Naive thymus-derived CD8-positive, alpha-beta T cell (primary cell): ENCODE measurements at regions of chr6 and their contacts with region 1.

Region 1: DNA sequence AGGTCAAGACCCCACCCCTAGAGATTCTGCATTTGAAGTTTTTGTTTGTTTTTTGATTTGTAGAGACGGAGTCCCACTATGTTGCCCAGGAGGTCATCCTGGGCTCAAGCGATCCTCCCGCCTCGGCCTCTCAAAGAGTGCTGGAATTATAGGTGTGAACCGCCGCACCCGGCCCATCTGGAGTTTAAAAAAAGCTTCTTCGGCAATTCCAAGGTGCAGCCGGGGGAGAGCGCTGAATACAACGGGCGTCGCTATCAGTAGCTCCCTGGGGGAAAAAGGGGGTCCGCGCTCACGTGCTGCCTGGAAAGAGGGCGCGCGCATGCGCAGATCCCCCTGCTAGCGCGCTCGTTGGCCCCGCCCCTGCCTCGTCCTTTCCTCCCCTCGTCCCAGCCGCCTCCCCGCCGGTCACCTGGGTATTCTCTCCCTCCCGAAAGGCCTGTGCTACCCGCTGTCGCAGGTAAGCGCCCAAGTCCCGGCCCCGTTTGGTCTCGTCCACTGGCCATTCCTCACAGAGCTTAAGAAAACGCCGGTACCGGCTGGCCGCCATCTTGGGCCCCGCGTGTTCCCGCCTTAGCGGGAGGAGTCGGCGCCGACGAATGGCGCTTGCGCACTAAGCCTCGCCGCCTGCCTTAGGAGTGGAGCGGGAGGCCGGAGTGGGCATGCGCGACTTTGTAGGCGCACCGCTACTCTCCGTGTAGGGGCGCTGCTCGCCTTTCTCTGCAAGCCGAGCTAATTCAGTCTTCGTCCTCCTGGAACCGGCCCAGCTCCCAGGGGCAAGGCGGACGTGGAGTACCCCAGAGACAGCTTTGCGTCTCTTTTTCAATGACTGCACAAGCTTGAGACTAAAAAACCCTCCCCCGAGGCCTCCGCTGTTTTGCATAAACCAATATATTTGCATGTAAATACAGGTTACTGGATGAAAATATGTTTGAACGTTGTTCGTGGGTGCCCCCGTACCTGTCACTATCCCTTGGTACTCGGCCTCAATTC is at the start of gene UQCC2:
- DNase-seq: peak; percentile 94 to 99 (median 98)
- ATAC-seq: peak; percentile 92 to 93
- H3K4me3 Mint-ChIP-seq: peak within 1 kb of the TSS; percentile 96 to 99 (median 98)
- H3K27ac Mint-ChIP-seq: peak within 1 kb of the TSS; percentile 86 to 99 (median 99)
- H3K4me1 Mint-ChIP-seq: peaks cover 20 to 44% (median 39%) of the 10 kb centered on the region in 4 donors
- H3K27me3 Mint-ChIP-seq: no peaks in the 10 kb centered on the region
- polyA plus RNA-seq, gene UQCC2: 44.4 to 57.7 (median 56.2) TPM

Region 2: DNA sequence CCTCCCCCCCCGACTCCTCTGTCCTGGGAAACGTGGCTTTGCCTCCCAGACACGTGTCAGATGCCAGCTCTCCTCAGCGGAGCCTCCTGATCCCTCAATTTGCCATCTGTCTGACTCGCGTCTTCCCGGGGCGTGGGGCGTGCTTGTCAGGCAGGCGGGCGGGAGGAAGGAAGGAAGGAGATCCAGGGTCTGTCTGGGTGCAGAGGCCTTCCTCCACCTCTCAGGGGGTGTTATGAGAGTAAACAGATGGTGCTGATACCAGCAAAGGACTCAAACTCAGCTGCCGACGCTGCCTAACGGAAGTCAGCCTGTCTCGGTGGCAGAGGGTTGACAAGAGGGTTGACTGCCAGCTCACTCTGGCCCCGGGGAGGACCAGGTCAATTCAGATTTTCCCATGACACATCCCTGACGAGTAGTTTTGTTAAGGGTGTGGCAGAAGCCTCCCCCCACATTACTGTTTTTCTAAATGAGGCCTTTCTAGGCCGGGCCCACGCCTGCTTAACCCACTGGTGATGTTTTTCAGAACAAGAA is 17.0 kb before region 1 on chr6:
- POLR2A ChIA-PET with region 1: interaction called, 22 read pairs
- DNase-seq: peak in 9 of 10 donors; percentile 32 to 78 (median 53)
- ATAC-seq: peak; percentile 54 to 77
- H3K4me3 Mint-ChIP-seq: peak overlapping the region; percentile 45 to 81 (median 74)
- H3K27ac Mint-ChIP-seq: peak overlapping the region; percentile 95 to 99 (median 97)
- H3K4me1 Mint-ChIP-seq: peaks cover 25 to 71% (median 70%) of the 10 kb centered on the region in 4 donors
- H3K27me3 Mint-ChIP-seq: no peaks in the 10 kb centered on the region

Region 3: DNA sequence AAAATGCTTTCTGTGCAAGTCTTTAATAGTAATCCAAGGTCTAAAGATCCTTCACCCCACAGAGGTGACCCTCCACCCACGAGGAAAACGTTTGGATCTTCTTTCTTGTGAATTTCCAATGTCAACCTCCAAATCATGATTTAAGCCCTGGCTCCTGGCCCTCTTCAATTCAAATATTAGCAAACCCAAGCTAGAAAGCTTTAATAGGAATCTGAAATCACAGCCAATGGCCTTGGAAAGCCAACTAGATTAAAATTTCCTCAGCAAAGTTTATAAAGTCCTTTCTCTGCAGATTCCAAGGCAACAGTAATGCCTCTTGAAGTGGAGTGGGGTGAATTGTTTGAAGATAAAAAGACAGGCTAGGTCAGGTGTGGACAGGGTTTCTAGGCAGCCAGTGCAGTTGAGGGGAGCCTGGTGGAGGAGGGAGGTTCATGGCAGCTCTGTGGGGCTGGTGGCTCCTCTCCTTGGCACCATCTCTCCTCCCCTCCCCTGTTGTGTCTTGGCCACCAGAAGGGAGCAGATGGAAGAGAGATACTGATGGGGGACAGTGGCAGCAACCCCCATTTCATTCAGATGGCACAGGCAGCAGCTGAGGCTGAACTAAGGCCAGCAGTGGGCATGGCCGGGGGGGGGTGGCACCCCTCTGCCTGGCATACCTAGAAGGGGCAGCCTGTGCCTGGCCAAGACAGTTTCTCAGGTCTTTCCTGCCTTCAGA is 12.1 kb after region 1 on chr6:
- POLR2A ChIA-PET with region 1: interaction called, 16 read pairs
- DNase-seq: no peak
- ATAC-seq: no peak
- H3K4me3 Mint-ChIP-seq: peak overlapping the region in 8 of 10 donors; percentile 46 to 80 (median 70)
- H3K27ac Mint-ChIP-seq: peak overlapping the region in 7 of 10 donors; percentile 52 to 90 (median 87)
- H3K4me1 Mint-ChIP-seq: peaks cover 16 to 24% (median 20%) of the 10 kb centered on the region in 4 donors
- H3K27me3 Mint-ChIP-seq: peaks cover 0 to 12% (median 4%) of the 10 kb centered on the region in 5 donors